IMR-90 (cell line): ENCODE measurements at regions of chr12 and their contacts with region 1.

Region 1: DNA sequence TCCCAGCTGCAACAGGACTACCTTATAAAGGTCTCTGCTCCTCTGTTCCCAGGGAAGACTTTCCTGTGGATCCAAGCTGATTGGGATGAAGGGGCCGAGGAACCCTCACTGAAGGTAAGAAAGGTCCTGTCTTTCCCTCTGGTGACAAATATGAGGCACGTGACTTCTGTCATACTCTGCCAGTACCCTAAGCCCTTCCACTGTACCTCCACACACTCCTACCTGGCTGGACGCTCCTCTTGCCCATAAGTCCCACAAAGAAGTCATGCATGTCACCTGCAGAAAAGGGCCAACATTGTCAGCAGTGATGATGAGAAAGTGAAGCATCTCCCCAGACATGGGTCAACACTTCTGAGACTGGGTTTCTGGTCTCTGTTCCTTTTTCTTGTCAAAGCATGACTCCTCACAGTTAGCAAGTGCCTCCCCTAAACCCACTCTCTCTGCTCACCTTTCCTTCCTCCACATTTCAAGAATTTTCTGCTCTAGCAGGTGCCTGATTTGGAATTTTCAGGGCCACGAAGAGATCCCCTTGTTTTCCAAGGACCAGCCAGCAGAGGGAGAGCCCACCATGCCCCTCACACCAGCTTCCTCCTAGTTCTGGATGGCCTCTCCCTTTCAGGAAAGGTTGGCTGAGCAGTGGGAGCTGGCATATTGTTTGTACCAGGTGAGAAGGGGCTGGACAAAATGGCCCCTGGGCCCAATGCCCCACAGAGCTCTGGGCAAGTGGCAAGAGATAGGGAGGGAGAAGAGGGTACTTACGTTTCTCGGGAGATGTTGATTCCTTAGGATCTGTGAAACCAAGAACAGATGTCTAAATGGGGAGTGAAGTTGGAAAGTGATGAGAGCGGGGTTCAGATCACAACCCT is 3.5 kb downstream of the TAC3 start:
- DNase-seq: no peak
- ATAC-seq: no peak
- H3K4me3 ChIP-seq: no peak overlapping the region
- H3K27ac ChIP-seq: no peak overlapping the region
- H3K4me1 ChIP-seq: peaks cover 6% of the 10 kb centered on the region
- H3K27me3 ChIP-seq: peaks cover 41% of the 10 kb centered on the region
- CTCF ChIP-seq: no peak
- POLR2A ChIP-seq: no peak
- RAD21 ChIP-seq: no peak

Region 2: DNA sequence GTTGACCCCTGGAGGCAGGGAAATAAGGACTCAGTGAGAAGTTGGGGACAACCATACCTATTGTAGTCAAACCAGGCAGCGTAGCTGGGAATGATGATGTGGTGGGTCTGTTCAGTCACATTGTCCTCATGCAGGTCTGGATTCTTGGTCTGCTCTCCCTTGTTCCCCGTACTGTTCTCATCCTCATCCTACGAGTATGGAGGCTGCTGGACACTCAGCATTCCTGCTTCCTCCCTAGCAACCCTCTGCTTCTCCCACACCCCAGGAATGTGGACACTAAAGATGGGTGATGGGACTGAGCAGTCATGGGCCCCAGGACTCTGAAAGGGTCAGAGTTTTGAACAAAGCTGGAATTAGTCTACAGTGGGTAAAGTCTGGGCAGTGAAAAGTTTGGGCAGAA is 834.5 kb before region 1 on chr12:
- CTCF ChIA-PET with region 1: no interaction called
- POLR2A ChIA-PET with region 1: no interaction called
- dilution Hi-C with region 1: no loop called
- in situ Hi-C with region 1: no loop called
- intact Hi-C with region 1: no loop called
- DNase-seq: no peak
- ATAC-seq: no peak
- H3K4me3 ChIP-seq: no peak overlapping the region
- H3K27ac ChIP-seq: no peak overlapping the region
- H3K4me1 ChIP-seq: no peaks in the 10 kb centered on the region
- H3K27me3 ChIP-seq: no peaks in the 10 kb centered on the region
- CTCF ChIP-seq: no peak
- POLR2A ChIP-seq: no peak
- RAD21 ChIP-seq: no peak

Region 3: DNA sequence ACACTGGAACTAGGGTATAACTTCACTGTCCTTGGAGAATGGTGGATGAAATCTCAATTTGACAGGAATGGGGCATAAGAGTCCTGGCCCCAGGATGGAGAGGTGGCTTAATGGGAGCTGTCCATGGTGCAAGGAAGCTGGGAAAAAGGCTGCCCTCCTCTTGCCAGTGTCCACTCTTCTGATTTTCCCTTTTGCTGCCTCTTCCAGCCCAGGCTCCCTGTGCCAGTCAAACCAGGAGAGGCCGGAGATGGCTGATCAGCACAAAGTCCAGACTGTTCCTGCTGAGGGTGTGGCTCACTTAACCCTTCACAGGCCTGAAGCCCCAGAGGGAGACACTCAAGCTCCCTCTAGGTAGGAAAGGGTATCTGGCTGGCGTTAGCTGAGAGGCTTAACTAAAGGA is 37.1 kb after region 1 on chr12 and contains the start of gene MYO1A:
- CTCF ChIA-PET with region 1: no interaction called
- POLR2A ChIA-PET with region 1: interaction called, 3 read pairs
- dilution Hi-C with region 1: no loop called
- in situ Hi-C with region 1: loop called (anchors 5 kb)
- intact Hi-C with region 1: no loop called
- DNase-seq: peak; percentile 19
- ATAC-seq: peak; percentile 73
- H3K4me3 ChIP-seq: no peak within 1 kb of the TSS
- H3K27ac ChIP-seq: no peak within 1 kb of the TSS
- H3K4me1 ChIP-seq: peaks cover 3% of the 10 kb centered on the region; the same call in 1 of the 2 replicates
- H3K27me3 ChIP-seq: peaks cover 14% of the 10 kb centered on the region
- CTCF ChIP-seq: no peak
- POLR2A ChIP-seq: no peak
- RAD21 ChIP-seq: no peak
- total RNA-seq, gene MYO1A: under 0.01 TPM in 1 of 2 replicates, not detected in the other

Region 4: DNA sequence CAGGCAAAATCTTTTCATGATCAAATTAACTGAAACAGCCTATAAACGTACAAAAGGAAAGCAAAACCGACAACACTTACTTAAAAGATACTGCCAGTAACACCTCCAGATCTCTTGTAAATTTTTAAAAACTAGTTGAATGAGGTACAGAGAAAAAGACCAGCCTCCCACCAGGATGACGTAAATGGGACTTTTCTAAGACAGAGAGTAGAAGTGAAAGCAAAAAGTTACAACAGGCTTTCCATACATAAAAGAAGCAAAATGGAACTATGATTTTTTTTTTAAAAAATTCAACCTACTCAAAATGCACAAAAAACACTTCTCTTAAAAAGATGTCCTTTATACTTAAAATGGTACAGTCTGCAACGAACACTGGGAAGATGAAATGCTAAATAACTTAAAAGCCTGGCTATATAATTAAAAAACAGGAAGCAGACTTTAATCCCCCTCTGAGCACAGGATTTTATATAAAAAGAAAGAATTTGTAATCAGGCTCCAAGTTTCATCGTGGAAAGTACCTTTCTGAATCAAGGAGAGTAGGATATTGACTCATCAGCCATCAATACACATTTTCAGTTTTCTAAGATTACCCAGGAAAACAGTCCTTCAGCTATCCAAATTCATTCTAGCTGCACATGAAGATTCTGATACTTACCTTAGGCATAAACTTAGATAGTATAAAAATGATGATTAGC is 51.3 kb after region 1 on chr12:
- CTCF ChIA-PET with region 1: interaction called, 10 read pairs
- POLR2A ChIA-PET with region 1: no interaction called
- dilution Hi-C with region 1: no loop called
- in situ Hi-C with region 1: no loop called
- intact Hi-C with region 1: loop called (anchors 1 kb)
- DNase-seq: peak; percentile 41
- ATAC-seq: no peak
- H3K4me3 ChIP-seq: no peak overlapping the region
- H3K27ac ChIP-seq: no peak overlapping the region
- H3K4me1 ChIP-seq: no peaks in the 10 kb centered on the region
- H3K27me3 ChIP-seq: no peaks in the 10 kb centered on the region
- CTCF ChIP-seq: no peak
- POLR2A ChIP-seq: no peak
- RAD21 ChIP-seq: no peak